MCF 10A (cell line): ENCODE measurements at regions of chr3 and their contacts with region 1.

Region 1: DNA sequence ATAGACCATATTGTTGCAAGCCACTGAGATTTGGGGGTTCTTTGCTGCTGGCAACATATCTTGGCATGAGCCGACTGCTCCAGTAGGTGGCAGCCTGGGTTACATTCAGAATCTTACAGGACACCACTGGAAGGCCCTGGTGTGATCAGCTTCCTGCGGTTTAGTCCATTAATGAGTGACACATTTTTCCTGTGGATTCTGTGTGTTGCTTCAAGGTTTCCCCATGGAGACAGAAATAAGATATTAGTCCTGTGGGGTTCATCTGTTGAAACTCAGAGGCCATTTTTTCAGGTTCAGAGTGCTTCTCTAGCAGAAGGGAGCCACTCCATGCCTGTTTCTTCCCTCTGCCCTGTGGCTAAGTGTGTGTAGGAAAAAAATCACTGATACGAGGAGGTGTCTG is 116.2 kb downstream of the MFSD1 start:
- DNase-seq: peak; percentile 70
- H3K4me3 Mint-ChIP-seq: no peak overlapping the region
- H3K27ac Mint-ChIP-seq: no peak overlapping the region
- H3K4me1 Mint-ChIP-seq: no peaks in the 10 kb centered on the region
- H3K27me3 Mint-ChIP-seq: peaks cover 31% of the 10 kb centered on the region
- CTCF ChIP-seq: peak; percentile 72

Region 2: GRCh38 chr3:158950178-158950901 is 32.3 kb after region 1 on chr3:
- CTCF ChIA-PET with region 1: no interaction called
- POLR2A ChIA-PET with region 1: no interaction called
- intact Hi-C with region 1: no loop called
- DNase-seq: peak; percentile 23
- H3K4me3 Mint-ChIP-seq: no peak overlapping the region
- H3K27ac Mint-ChIP-seq: no peak overlapping the region
- H3K4me1 Mint-ChIP-seq: no peaks in the 10 kb centered on the region
- H3K27me3 Mint-ChIP-seq: no peaks in the 10 kb centered on the region
- CTCF ChIP-seq: no peak

Region 3: DNA sequence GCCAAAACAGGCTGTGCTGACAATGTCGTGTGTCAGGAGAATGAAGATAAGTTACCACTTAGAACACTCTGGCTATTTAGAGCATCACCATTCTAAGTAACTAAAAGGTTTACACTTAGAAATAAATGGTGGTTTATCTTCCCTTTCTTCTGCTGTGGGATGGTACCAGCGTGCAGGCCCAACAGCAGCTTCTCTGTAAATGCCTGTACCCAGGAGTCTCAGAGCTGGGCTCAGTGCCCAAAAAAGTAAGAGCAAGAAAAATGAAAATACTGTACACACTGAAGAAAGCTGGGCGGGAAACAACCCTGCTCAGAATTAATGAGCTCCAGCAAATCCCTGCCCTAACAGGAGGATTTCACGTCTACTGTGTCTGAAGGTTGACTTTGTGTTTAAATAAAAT is 90.4 kb after region 1 on chr3:
- CTCF ChIA-PET with region 1: no interaction called
- POLR2A ChIA-PET with region 1: no interaction called
- intact Hi-C with region 1: no loop called
- DNase-seq: no peak
- H3K4me3 Mint-ChIP-seq: no peak overlapping the region
- H3K27ac Mint-ChIP-seq: no peak overlapping the region
- H3K4me1 Mint-ChIP-seq: no peaks in the 10 kb centered on the region
- H3K27me3 Mint-ChIP-seq: peaks cover 27% of the 10 kb centered on the region
- CTCF ChIP-seq: no peak

Region 4: DNA sequence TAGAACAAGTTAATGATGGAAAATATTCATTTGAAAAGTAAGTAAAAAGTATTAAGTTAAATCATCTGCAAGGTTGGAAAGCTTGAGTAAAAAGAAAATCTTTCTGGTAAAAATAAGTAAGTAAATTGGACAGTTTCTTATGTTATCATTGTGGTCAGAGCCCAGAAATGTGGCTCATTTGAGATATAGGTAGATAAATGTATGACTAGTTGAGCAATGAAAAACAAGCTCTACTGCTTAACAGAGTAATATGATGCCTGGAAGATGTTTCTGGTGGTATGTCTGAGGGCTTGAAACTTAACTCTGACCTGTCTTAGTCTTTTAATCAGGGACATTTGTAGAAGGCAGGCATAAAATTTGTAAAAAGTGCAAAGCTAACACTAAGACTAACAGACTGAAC is 327.9 kb after region 1 on chr3:
- CTCF ChIA-PET with region 1: interaction called, 29 read pairs
- POLR2A ChIA-PET with region 1: no interaction called
- intact Hi-C with region 1: no loop called
- DNase-seq: no peak
- H3K4me3 Mint-ChIP-seq: no peak overlapping the region
- H3K27ac Mint-ChIP-seq: no peak overlapping the region
- H3K4me1 Mint-ChIP-seq: no peaks in the 10 kb centered on the region
- H3K27me3 Mint-ChIP-seq: peaks cover 10% of the 10 kb centered on the region
- CTCF ChIP-seq: no peak

Region 5: GRCh38 chr3:159252772-159253384 is 334.9 kb after region 1 on chr3:
- CTCF ChIA-PET with region 1: interaction called, 29 read pairs
- POLR2A ChIA-PET with region 1: interaction called, 3 read pairs
- intact Hi-C with region 1: loop called (anchors 1 kb)
- DNase-seq: peak; percentile 54
- H3K4me3 Mint-ChIP-seq: no peak overlapping the region
- H3K27ac Mint-ChIP-seq: no peak overlapping the region
- H3K4me1 Mint-ChIP-seq: no peaks in the 10 kb centered on the region
- H3K27me3 Mint-ChIP-seq: peaks cover 61% of the 10 kb centered on the region
- CTCF ChIP-seq: peak; percentile 76